ENCODE measurements at regions of chr6 and their contacts with region 1.

Region 1: DNA sequence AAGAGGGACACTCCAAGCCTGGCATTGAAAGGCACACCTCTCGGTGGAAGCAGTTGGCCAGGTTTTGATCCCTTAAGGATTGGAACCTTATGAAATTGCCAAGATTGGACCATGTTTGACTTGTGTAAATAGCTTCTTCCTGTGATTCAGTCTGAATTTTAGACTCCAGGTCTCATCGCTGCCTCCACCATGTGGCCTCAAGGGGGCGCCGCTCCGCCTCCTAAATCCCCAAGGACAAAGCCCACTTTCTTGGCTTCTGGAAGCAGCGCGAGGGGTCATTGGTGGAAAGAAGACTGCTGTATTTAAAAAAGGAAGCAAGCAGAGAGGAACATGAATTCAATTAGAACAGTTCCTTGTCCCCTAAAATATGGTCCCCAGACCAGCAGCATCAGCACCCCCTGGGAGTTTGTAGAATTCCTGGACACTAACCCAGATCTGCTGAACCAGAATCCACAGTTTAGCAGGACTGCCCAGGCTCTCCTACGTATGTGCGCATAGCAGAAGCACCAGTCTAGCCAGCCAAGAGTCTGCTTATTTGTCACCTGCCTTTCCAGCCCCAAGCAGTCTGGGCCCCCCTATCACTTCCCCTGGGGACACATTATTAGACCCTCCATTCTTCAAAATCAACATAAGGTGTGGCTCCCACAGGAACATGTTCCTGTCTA is 108.5 kb downstream of the LY86 start:
- H3K4me3 ChIP-seq: no peak overlapping the region
- H3K27ac ChIP-seq: no peak overlapping the region
- H3K4me1 ChIP-seq: peaks cover 10% of the 10 kb centered on the region
- CTCF ChIP-seq: peak; percentile 49

Region 2: DNA sequence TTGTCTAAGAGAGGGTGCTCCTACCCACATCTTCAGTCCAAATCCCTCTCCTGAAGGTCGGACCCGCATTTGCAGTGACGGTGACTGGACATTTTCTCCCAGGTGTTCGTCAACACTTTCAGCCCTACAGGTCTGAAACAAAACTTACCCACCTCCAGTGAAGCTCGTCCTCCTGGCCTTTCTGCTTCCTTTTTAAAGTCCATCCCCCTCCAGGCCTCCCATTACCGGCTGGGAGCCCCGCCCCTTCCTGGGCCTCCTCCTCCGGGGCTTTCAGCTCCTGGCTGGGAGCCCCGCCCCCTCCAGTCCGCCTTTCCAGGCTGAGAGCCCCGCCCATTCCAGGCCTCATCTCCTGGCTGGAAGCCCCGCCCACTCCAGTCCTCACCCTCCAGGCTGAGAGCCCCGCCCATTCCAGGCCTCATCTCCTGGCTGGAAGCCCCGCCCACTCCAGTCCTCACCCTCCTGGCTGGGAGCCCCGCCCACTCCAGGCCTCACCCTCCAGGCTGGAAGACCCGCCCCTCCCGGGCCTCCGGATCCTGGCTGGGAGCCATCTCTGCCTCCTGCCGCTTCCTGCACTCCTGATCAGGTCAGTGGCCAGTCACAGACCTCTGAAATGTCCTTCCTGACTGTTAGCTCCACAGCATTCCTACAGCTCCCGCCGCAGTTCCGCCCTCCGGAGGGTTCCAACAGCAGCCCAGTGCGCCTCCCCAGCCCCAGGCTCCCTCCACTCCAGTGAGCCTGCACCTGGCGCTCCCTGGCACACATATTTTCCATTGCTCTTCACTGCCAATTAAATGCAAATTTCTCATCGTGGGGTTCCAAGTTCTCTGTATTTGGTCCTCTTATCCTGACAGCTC is 10.0 kb before region 1 on chr6:
- CTCF ChIA-PET with region 1: interaction called, 72 read pairs
- POLR2A ChIA-PET with region 1: interaction called, 11 read pairs
- H3K4me3 ChIP-seq: peak overlapping the region; percentile 38
- H3K27ac ChIP-seq: no peak overlapping the region; the same call in 1 of the 2 replicates
- H3K4me1 ChIP-seq: peaks cover 6% of the 10 kb centered on the region; the same call in 1 of the 2 replicates
- CTCF ChIP-seq: no peak

Region 3: GRCh38 chr6:6712258-6712999 is 15.4 kb after region 1 on chr6:
- CTCF ChIA-PET with region 1: interaction called, 10 read pairs
- POLR2A ChIA-PET with region 1: no interaction called
- H3K4me3 ChIP-seq: no peak overlapping the region
- H3K27ac ChIP-seq: no peak overlapping the region
- H3K4me1 ChIP-seq: no peaks in the 10 kb centered on the region; the same call in 1 of the 2 replicates
- CTCF ChIP-seq: no peak

Region 4: GRCh38 chr6:6724539-6725467 is 27.8 kb after region 1 on chr6:
- CTCF ChIA-PET with region 1: interaction called, 40 read pairs
- POLR2A ChIA-PET with region 1: no interaction called
- H3K4me3 ChIP-seq: no peak overlapping the region
- H3K27ac ChIP-seq: no peak overlapping the region
- H3K4me1 ChIP-seq: no peaks in the 10 kb centered on the region
- CTCF ChIP-seq: peak; percentile 37; the same call in 1 of the 2 replicates